Activated CD4-positive, alpha-beta memory T cell treated with anti-CD3 and anti-CD28 coated beads for 36 hours (primary cell): ENCODE measurements at regions of chr6 and their contacts with region 1.

Region 1: GRCh38 chr6:42520786-42521607 is 42.8 kb upstream of the UBR2 start:
- DNase-seq: peak; percentile 51
- H3K4me3 Mint-ChIP-seq: no peak overlapping the region
- H3K27ac Mint-ChIP-seq: peak overlapping the region; percentile 82
- H3K4me1 Mint-ChIP-seq: peaks cover 21% of the 10 kb centered on the region
- H3K27me3 Mint-ChIP-seq: peaks cover 1% of the 10 kb centered on the region

Region 2: DNA sequence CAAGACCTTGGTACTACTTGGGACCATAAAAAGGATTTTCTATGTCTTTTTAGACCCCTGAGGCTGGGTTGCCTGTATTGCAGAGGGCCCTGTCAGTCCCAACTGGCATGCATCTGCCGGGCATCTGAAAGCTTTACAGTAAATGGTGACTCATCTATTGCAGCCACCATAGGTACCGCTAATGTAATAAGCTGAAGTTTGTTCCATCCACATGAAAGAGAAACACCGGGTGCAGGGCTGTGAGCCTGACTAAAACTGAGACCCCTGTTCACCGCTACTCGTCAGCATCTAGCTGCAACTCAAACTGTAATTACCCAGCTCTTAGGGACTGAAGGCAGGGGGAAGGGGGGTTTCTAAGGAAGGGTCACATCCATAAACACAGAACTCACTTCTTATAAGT is 118.8 kb before region 1 on chr6:
- CTCF ChIA-PET with region 1: no interaction called
- POLR2A ChIA-PET with region 1: interaction called, 3 read pairs
- intact Hi-C with region 1: loop called (anchors 5 kb)
- DNase-seq: peak; percentile 85
- H3K4me3 Mint-ChIP-seq: no peak overlapping the region
- H3K27ac Mint-ChIP-seq: peak overlapping the region; percentile 76
- H3K4me1 Mint-ChIP-seq: peaks cover 81% of the 10 kb centered on the region
- H3K27me3 Mint-ChIP-seq: no peaks in the 10 kb centered on the region

Region 3: DNA sequence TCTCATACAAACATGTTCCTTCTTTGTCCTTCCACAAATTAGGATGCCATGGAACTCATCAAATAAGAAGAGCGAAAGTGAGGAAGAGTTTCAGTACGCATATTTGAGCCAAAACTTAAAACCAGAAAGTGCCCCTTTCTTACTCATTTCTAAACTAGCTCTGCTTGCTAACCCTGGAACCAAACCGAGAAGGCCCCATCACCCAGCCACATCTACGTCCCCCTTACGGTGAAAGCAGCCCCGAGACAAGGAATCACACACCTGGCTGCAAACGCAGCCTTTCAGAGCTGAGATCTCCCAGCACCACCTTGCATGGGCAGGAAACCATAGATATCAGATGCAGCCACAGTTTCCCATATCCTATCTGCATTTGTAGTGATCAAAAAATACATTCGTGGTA is 97.8 kb before region 1 on chr6:
- CTCF ChIA-PET with region 1: no interaction called
- POLR2A ChIA-PET with region 1: interaction called, 3 read pairs
- intact Hi-C with region 1: loop called (anchors 5 kb)
- DNase-seq: peak; percentile 74
- H3K4me3 Mint-ChIP-seq: peak overlapping the region; percentile 18
- H3K27ac Mint-ChIP-seq: peak overlapping the region; percentile 72
- H3K4me1 Mint-ChIP-seq: peaks cover 57% of the 10 kb centered on the region
- H3K27me3 Mint-ChIP-seq: no peaks in the 10 kb centered on the region

Region 4: GRCh38 chr6:42505377-42505702 is 15.7 kb before region 1 on chr6:
- CTCF ChIA-PET with region 1: interaction called, 3 read pairs
- POLR2A ChIA-PET with region 1: interaction called, 3 read pairs
- intact Hi-C with region 1: loop called (anchors 1 kb)
- DNase-seq: no peak
- H3K4me3 Mint-ChIP-seq: no peak overlapping the region
- H3K27ac Mint-ChIP-seq: no peak overlapping the region
- H3K4me1 Mint-ChIP-seq: peaks cover 33% of the 10 kb centered on the region
- H3K27me3 Mint-ChIP-seq: no peaks in the 10 kb centered on the region